OCI-LY7 (cell line): ENCODE measurements at regions of chr15 and their contacts with region 1.

Region 1: DNA sequence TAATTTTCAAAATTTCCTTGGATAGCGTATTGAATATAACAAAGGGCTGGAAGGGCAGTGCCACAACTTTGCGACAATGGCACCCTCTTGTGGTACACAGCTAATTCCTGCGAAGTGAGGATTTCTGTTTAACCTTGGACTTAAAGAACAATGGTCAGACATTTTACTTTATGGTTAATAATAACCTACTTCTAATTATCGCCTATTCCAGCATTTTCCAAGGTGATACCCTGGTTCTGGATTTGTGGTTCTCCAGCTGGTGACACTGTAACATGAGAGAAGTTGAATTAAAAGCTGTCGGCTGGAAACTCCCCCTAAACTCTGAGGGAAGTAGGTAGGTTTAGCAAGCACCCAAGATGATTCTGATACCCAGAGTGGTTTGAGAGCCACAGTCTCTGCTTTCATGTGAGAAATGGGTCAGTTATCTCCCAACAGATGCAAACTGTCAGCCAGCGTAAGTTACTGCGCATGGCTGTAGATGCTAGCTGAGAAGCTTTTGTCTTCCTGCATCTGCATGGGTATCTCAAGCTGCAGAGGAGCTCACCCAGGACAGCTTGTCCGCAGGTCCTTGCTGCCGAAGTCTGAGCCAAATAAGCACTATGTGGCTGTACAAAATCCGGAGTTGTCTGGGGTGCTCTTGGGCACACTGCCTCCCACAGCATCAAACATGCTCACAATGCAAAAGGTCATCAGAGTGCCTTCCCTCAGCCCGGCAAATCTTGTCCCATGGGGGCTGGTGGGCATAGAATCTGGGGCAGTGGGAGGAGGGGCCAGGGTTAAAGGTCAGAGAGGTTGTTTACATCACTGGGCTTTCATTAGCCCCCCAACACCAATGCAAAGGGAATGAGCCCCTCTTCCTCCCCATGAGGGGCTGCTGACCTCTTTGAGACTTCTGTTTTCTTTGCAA is 6.6 kb upstream of the CHSY1 start:
- DNase-seq: peak; percentile 73
- H3K4me3 ChIP-seq: no peak overlapping the region
- H3K27ac ChIP-seq: no peak overlapping the region
- H3K4me1 ChIP-seq: no peaks in the 10 kb centered on the region
- CTCF ChIP-seq: peak; percentile 100

Region 2: DNA sequence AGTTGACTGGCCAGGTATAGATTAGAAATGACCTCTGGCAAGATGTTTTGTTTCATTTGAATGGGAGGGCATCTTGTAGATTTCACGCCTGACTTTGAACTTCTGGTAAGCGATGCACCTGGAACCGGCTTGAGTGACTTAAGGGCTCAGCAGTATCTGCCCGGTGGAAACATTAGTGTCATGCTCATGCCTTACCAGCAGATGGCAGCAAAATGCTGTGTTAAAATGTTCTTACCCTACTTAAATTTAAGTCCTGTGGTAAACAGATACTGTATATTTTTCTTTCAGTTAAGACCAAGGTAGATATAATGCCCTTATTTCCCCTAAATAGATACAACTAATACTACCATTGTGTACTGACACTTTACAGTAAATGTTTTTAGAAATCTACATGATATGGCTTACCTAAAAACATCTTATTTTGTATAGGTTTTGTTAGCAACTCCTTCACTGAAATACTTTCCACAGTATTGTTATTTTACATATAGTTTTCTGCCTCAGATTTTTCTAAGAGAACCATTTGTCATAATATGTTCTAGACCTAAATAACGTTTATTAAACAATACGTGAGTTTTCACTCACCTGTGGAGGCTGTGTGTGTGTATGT is 630.6 kb before region 1 on chr15:
- CTCF ChIA-PET with region 1: no interaction called
- POLR2A ChIA-PET with region 1: no interaction called
- intact Hi-C with region 1: loop called (anchors 1 kb)
- DNase-seq: peak; percentile 72
- H3K4me3 ChIP-seq: no peak overlapping the region
- H3K27ac ChIP-seq: no peak overlapping the region
- H3K4me1 ChIP-seq: no peaks in the 10 kb centered on the region
- CTCF ChIP-seq: peak; percentile 93

Region 3: DNA sequence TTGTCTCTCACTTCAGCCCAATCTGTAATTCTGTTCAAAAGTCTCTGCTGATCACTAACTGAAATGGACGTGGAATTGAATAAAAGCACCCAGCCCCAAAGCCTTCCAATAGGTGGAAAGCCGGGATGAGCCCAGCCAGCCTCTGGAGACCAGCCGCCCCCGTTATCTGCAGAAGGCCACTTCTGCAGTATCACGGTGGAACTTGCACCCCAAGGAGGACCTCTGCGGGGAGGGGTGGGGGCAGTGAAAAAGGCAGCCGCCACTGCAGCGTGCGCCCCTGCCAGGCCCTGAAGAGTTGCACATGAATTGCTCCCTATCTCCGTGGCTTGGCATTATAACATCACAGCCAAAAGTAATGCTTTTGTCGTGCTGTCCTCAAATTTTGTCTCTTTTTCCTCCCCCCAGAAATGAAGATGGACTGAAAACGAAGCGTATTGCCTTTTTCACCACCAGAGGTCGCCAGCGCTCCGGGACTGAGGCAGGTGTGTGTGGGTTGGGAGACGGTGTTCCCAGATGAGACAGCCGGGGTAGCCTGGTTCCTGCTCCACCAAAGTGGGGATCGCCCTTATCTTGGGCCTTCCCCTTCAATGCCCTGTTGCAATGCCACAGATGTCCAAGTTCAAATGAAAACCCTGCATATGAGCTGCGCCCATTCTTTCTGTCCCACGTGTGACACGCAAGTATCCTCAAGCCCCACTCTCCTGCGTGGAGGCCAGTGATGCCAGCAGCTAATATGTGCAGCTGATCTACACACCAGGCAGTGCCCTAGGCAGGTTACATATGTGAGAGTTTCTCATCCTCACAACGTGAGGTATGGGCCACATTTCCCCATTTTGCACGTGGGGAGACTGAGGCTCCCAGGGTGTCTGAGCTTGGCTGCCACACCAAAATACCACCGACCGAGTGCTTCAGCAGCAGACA is 243.3 kb before region 1 on chr15:
- CTCF ChIA-PET with region 1: no interaction called
- POLR2A ChIA-PET with region 1: no interaction called
- intact Hi-C with region 1: loop called (anchors 2 kb)
- DNase-seq: peak; percentile 45
- H3K4me3 ChIP-seq: no peak overlapping the region
- H3K27ac ChIP-seq: no peak overlapping the region
- H3K4me1 ChIP-seq: no peaks in the 10 kb centered on the region
- CTCF ChIP-seq: peak; percentile 90

Region 4: GRCh38 chr15:101088788-101089583 is 169.5 kb before region 1 on chr15:
- CTCF ChIA-PET with region 1: interaction called, 8 read pairs
- POLR2A ChIA-PET with region 1: no interaction called
- intact Hi-C with region 1: loop called (anchors 1 kb)
- DNase-seq: peak; percentile 66
- H3K4me3 ChIP-seq: no peak overlapping the region
- H3K27ac ChIP-seq: no peak overlapping the region
- H3K4me1 ChIP-seq: no peaks in the 10 kb centered on the region
- CTCF ChIP-seq: peak; percentile 96

Region 5: DNA sequence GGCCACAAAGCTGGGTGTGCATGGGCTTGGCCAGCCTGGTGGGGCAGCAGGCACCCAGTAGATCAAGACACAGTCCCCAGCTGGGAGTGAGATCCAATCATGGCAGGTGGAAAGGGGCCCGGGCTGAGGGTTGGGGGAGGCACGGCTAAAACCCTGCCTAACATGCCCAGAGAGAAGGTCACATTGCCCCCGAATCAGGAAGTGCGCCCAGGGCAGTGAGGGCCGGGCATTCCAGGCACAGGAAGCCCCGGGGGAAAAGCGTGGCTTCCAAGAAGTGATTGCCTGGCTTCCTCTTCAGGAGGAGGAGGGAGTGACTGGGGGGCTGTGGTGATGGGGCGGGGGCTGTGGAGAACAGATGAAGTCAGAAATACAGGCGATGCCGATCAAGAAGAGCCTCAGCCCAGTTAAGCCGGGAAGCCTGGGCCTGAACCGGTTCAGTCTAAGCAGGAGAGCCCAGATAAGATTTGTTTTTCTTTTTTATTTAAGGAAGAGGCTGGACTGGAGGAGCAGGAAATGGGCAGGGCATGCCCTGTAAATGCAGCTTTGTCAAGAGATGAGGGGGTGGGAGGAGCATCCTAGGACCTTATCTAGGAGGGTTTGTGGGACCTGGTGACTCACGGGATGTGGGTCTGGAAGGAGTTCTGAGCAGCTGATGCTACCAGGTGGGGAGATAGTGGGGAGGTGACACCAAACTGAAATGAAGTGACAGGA is 90.6 kb before region 1 on chr15:
- CTCF ChIA-PET with region 1: no interaction called
- POLR2A ChIA-PET with region 1: no interaction called
- intact Hi-C with region 1: no loop called
- DNase-seq: no peak
- H3K4me3 ChIP-seq: no peak overlapping the region
- H3K27ac ChIP-seq: no peak overlapping the region
- H3K4me1 ChIP-seq: no peaks in the 10 kb centered on the region
- CTCF ChIP-seq: no peak